HEK293 (cell line): ENCODE measurements at regions of chr6 and their contacts with region 1.

Region 1: GRCh38 chr6:31639449-31639861 is 13.0 kb downstream of the BAG6 start:
- H3K4me3 ChIP-seq: no peak overlapping the region
- H3K27ac ChIP-seq: no peak overlapping the region; the same call in 1 of the 2 replicates
- H3K4me1 ChIP-seq: no peaks in the 10 kb centered on the region
- CTCF ChIP-seq: no peak

Region 2: DNA sequence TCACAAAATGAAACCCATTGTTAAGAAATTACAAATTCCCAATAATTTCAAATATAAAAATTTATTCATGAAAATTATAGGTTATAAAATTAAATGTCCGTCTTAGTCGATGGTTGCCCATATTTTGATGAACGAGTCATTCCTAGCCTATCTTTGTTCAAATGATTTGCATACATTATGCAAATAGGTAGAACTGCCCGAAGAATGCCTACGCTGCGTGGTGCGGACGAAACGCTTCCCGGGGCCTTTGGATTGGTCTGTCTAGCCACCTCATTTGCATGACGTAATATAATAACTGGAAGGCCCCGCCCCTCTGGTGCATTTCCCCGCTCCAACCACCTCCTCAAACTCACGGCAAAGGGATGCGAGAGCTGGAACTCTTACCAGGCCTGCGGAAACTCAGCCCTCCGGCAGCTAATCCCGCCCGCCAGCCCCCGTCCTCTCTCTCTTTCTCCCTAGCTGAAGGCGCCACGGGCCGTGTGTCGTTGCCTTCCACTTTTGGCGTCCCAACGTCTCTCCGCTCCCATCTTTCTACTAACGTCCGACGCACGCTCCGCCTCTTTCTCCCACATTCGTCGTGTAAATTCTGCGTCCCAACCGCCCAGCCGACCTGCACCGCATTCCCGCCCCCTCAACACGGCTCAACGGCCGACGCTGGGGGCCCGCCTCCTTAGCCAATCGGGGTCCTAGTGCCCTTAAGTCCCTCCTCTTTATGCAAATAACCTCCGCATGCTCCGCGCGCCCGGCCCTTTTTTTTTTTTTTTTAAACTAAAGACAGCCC is 19.5 kb before region 1 on chr6:
- CTCF ChIA-PET with region 1: interaction called, 3 read pairs
- POLR2A ChIA-PET with region 1: interaction called, 123 read pairs
- H3K4me3 ChIP-seq: peak overlapping the region; percentile 66
- H3K27ac ChIP-seq: peak overlapping the region; percentile 99
- H3K4me1 ChIP-seq: peaks cover 7% of the 10 kb centered on the region; the same call in 1 of the 2 replicates
- CTCF ChIP-seq: no peak

Region 3: GRCh38 chr6:31660381-31661261 is 21.2 kb after region 1 on chr6 and contains the start of gene C6orf47:
- CTCF ChIA-PET with region 1: interaction called, 4 read pairs
- POLR2A ChIA-PET with region 1: interaction called, 12 read pairs
- H3K4me3 ChIP-seq: peak within 1 kb of the TSS; percentile 67
- H3K27ac ChIP-seq: peak within 1 kb of the TSS; percentile 73
- H3K4me1 ChIP-seq: peaks cover 6% of the 10 kb centered on the region; the same call in 1 of the 2 replicates
- CTCF ChIP-seq: no peak

Region 4: DNA sequence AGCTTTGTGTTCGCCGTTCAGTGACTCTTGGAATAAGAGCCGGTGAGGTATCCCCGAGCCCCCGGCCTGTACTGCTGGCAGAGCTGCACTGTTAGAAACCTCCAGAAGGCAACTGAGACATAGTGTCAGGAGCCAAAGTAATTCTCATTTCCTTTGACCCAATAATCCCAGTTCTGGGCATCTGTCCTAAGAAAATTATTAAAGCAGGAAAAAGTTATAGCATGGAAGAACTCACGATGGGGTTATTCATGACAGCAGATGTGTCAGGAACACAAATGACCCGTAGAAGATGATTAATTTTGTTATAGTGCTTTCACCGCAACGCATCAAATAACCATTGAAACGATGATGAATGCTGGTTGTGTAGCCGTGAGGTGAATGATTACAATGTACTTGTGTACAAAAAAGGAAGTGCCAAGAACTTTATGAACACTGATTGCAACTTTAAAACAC is 419.1 kb after region 1 on chr6:
- CTCF ChIA-PET with region 1: no interaction called
- POLR2A ChIA-PET with region 1: no interaction called
- H3K4me3 ChIP-seq: no peak overlapping the region
- H3K27ac ChIP-seq: no peak overlapping the region
- H3K4me1 ChIP-seq: no peaks in the 10 kb centered on the region
- CTCF ChIP-seq: no peak